Endothelial cell of umbilical vein (primary cell): ENCODE measurements at regions of chr4 and their contacts with region 1.

Region 1: GRCh38 chr4:76087007-76087769 is 12.7 kb downstream of the ART3 start:
- DNase-seq: peak; percentile 78
- H3K4me3 ChIP-seq: no peak overlapping the region
- H3K27ac ChIP-seq: no peak overlapping the region
- H3K4me1 ChIP-seq: peaks cover 7% of the 10 kb centered on the region
- H3K27me3 ChIP-seq: peaks cover 4 to 15% of the 10 kb centered on the region in 2 experiments
- CTCF ChIP-seq: peak; percentile 55 to 64
- POLR2A ChIP-seq: no peak

Region 2: GRCh38 chr4:75831856-75832405 is 255.3 kb before region 1 on chr4:
- CTCF ChIA-PET with region 1: no interaction called
- POLR2A ChIA-PET with region 1: no interaction called
- dilution Hi-C with region 1: no loop called
- intact Hi-C with region 1: no loop called
- DNase-seq: no peak
- H3K4me3 ChIP-seq: no peak overlapping the region
- H3K27ac ChIP-seq: no peak overlapping the region
- H3K4me1 ChIP-seq: no peaks in the 10 kb centered on the region
- H3K27me3 ChIP-seq: peaks cover 0 to 2% of the 10 kb centered on the region in 2 experiments
- CTCF ChIP-seq: no peak
- POLR2A ChIP-seq: no peak

Region 3: GRCh38 chr4:75916091-75916661 is 171.0 kb before region 1 on chr4:
- CTCF ChIA-PET with region 1: interaction called, 14 read pairs
- POLR2A ChIA-PET with region 1: no interaction called
- dilution Hi-C with region 1: no loop called
- intact Hi-C with region 1: loop called (anchors 1 kb)
- DNase-seq: peak; percentile 73
- H3K4me3 ChIP-seq: no peak overlapping the region
- H3K27ac ChIP-seq: no peak overlapping the region
- H3K4me1 ChIP-seq: no peaks in the 10 kb centered on the region
- H3K27me3 ChIP-seq: no peaks in the 10 kb centered on the region
- CTCF ChIP-seq: peak; percentile 64 to 75
- POLR2A ChIP-seq: no peak

Region 4: GRCh38 chr4:75989846-75990528 is 97.2 kb before region 1 on chr4:
- CTCF ChIA-PET with region 1: interaction called, 124 read pairs
- POLR2A ChIA-PET with region 1: no interaction called
- dilution Hi-C with region 1: no loop called
- intact Hi-C with region 1: loop called (anchors 5 kb)
- DNase-seq: peak; percentile 42
- H3K4me3 ChIP-seq: peak overlapping the region; percentile 61 to 92 (median 91)
- H3K27ac ChIP-seq: peak overlapping the region; percentile 84
- H3K4me1 ChIP-seq: peaks cover 10% of the 10 kb centered on the region
- H3K27me3 ChIP-seq: peaks cover 6 to 8% of the 10 kb centered on the region in 2 experiments
- CTCF ChIP-seq: no peak
- POLR2A ChIP-seq: no peak

Region 5: GRCh38 chr4:76055016-76055415 is 32.2 kb before region 1 on chr4:
- CTCF ChIA-PET with region 1: interaction called, 10 read pairs
- POLR2A ChIA-PET with region 1: no interaction called
- dilution Hi-C with region 1: no loop called
- intact Hi-C with region 1: no loop called
- DNase-seq: no peak
- H3K4me3 ChIP-seq: no peak overlapping the region
- H3K27ac ChIP-seq: no peak overlapping the region
- H3K4me1 ChIP-seq: no peaks in the 10 kb centered on the region
- H3K27me3 ChIP-seq: peaks cover 35 to 55% of the 10 kb centered on the region in 2 experiments
- CTCF ChIP-seq: no peak
- POLR2A ChIP-seq: no peak

Region 6: GRCh38 chr4:76105652-76106051 is 18.5 kb after region 1 on chr4:
- CTCF ChIA-PET with region 1: interaction called, 17 read pairs
- POLR2A ChIA-PET with region 1: interaction called, 3 read pairs
- dilution Hi-C with region 1: no loop called
- intact Hi-C with region 1: no loop called
- DNase-seq: no peak
- H3K4me3 ChIP-seq: no peak overlapping the region
- H3K27ac ChIP-seq: no peak overlapping the region
- H3K4me1 ChIP-seq: no peaks in the 10 kb centered on the region
- H3K27me3 ChIP-seq: peaks cover 4 to 5% of the 10 kb centered on the region in 2 experiments
- CTCF ChIP-seq: no peak
- POLR2A ChIP-seq: no peak

Region 7: DNA sequence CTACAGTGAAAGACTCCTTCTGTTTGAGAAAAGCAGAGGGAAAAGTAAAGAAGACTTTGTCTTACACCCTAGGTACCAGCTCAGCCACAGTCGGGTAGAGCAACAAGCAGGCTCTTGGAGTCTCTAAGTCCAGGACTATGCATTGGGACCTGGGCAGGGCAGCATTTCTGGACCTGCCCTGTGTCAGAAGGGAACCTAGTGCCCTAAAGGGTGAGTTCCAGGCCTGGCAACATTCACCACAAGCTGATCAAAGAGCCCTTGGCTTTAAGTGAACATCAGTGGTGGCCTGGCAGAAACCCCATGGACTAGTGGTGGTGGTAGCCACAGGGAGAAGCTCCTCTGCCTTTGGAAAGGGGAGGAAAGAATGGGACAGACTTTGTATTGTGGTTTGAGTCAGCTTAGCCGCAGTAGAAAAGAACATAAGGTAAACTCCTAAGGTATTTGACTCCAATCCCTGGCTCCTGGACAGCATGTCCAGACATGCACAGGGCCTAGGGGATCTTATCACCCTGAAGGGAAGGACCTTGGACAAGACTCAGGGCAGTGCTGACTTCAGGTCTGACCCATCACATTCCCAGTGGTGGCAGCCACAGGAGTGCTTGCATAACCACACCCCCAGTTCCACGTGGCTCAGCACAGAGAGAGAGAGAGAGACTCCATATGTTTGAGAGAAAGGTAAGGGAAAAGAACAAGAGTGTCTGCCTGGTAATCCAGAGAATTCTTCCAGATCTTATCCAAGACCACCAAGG is 301.1 kb after region 1 on chr4:
- CTCF ChIA-PET with region 1: no interaction called
- POLR2A ChIA-PET with region 1: no interaction called
- dilution Hi-C with region 1: no loop called
- intact Hi-C with region 1: no loop called
- DNase-seq: no peak
- H3K4me3 ChIP-seq: no peak overlapping the region
- H3K27ac ChIP-seq: no peak overlapping the region
- H3K4me1 ChIP-seq: no peaks in the 10 kb centered on the region
- H3K27me3 ChIP-seq: peaks cover 2 to 44% of the 10 kb centered on the region in 2 experiments
- CTCF ChIP-seq: no peak
- POLR2A ChIP-seq: no peak